Activated T-helper 1 cell treated with anti-CD3 and anti-CD28 coated beads, Interleukin-12 subunit alpha, Interleukin-12 subunit beta, Interleukin-2, Interleukin-4 antibody, amounts not matched to agents 30 ng/mL and 10 ng/mL and 1 ng/mL, durations not matched to agents 14 hours and 24 hours and 36 hours (primary cell): ENCODE measurements at regions of chr5 and their contacts with region 1.

Region 1: GRCh38 chr5:169583424-169584204 is at the start of gene SPDL1:
- DNase-seq: peak; percentile 94
- H3K4me3 Mint-ChIP-seq: peak within 1 kb of the TSS; percentile 98
- H3K27ac Mint-ChIP-seq: peak within 1 kb of the TSS; percentile 85
- H3K4me1 Mint-ChIP-seq: peaks cover 46% of the 10 kb centered on the region
- H3K27me3 Mint-ChIP-seq: peaks cover 7% of the 10 kb centered on the region
- total RNA-seq, gene SPDL1: 34.1 and 41.0 TPM in 2 replicates

Region 2: GRCh38 chr5:168486136-168486879 is 1097.3 kb before region 1 on chr5 and contains the start of gene RARS1:
- intact Hi-C with region 1: loop called (anchors 5 kb)
- DNase-seq: peak; percentile 86
- H3K4me3 Mint-ChIP-seq: peak within 1 kb of the TSS; percentile 100
- H3K27ac Mint-ChIP-seq: peak within 1 kb of the TSS; percentile 86
- H3K4me1 Mint-ChIP-seq: peaks cover 38% of the 10 kb centered on the region
- H3K27me3 Mint-ChIP-seq: no peaks in the 10 kb centered on the region
- total RNA-seq, gene RARS1: 137 and 145 TPM in 2 replicates

Region 3: DNA sequence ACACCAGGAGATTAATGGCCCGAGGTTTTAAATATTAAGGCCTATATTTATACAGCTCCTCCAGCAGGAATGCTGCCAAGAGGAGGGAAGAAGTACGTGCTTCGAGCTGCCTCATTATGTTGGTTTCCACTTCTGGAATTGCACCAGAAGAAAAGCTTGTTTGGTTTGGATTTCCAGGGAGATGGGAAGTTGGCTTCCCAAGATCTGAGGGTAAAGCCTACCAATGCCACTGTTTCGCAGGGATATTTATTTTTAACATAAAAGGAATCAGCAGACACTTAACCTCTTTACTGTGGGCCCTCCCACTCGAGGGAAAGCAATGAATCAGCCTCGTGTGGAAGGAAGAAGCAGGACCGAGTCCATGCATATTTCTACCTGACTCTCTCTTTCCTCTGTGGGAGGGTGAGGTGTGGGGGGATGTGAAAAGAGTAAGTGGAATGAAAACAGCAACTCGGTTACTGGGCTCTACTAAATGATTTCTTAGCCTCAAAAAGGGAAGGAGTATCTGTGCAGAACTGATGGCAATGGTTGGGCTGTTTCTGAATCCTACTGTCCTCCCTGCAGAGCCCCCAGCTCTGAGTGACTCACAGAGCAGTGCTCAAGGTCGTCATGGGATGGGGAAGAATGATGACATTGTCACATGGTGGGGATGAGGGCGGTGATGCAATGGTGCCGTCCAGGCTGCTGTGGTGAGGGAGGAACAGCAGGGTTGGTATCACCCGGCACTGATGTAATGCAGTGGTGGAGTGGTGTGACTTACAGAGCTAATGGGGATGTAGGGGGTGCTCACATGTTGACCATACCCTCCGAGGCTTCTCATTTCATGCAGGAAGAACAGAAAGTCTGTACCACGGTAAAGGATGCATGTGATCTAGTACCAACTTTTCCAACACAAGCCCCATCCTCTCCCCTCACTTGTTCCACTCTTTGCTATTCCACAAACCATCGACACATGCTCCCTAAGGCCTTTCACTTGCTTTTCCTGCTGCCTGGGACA is 789.5 kb before region 1 on chr5:
- intact Hi-C with region 1: loop called (anchors 5 kb)
- DNase-seq: no peak
- H3K4me3 Mint-ChIP-seq: no peak overlapping the region
- H3K27ac Mint-ChIP-seq: peak overlapping the region; percentile 72
- H3K4me1 Mint-ChIP-seq: peaks cover 41% of the 10 kb centered on the region
- H3K27me3 Mint-ChIP-seq: no peaks in the 10 kb centered on the region

Region 4: GRCh38 chr5:169445191-169445590 is 138.4 kb before region 1 on chr5:
- intact Hi-C with region 1: loop called (anchors 5 kb)
- DNase-seq: no peak
- H3K4me3 Mint-ChIP-seq: no peak overlapping the region
- H3K27ac Mint-ChIP-seq: no peak overlapping the region
- H3K4me1 Mint-ChIP-seq: no peaks in the 10 kb centered on the region
- H3K27me3 Mint-ChIP-seq: peaks cover 5% of the 10 kb centered on the region

Region 5: GRCh38 chr5:169670769-169671525 is 87.3 kb after region 1 on chr5:
- intact Hi-C with region 1: loop called (anchors 1 kb)
- DNase-seq: peak; percentile 58
- H3K4me3 Mint-ChIP-seq: peak overlapping the region; percentile 4
- H3K27ac Mint-ChIP-seq: peak overlapping the region; percentile 79
- H3K4me1 Mint-ChIP-seq: peaks cover 61% of the 10 kb centered on the region
- H3K27me3 Mint-ChIP-seq: no peaks in the 10 kb centered on the region

Region 6: DNA sequence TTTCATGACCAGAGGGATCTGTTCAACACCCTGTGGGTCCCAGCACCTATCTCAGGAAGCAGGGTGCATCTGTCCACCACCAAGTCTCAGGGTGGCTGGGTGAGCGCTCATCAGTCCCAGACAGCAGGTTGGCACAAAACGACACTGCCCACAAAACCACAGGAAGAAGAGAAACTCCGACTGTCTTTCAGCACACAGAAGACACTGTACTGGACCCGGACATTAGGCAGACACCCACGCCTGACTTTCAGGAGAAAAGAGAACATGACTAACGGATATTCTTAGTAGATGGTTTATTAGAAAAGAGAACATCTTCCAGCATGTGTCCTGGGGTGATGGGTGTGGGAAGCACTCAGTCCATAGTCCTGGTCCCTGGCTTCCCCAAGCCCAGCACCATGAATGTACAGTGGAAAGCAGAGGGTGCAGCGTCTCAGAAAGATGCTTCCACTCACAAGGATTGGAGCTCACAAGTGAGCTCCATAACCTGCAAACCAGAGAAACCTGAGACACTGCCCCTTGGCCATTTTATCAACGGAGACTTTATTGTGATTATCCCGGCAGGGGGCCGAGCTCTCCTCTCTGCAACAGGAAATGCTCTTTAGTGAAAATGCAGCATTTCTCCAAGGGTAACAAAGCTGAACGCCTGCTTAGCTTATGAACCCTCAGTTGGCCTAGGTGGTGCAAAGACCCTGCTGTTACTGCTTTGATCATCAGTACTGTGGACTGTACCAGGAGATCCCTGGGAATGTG is 749.7 kb after region 1 on chr5:
- intact Hi-C with region 1: loop called (anchors 5 kb)
- DNase-seq: peak; percentile 41
- H3K4me3 Mint-ChIP-seq: peak overlapping the region; percentile 76
- H3K27ac Mint-ChIP-seq: no peak overlapping the region
- H3K4me1 Mint-ChIP-seq: peaks cover 8% of the 10 kb centered on the region
- H3K27me3 Mint-ChIP-seq: peaks cover 2% of the 10 kb centered on the region